Calu3 (cell line): ENCODE measurements at regions of chr12 and their contacts with region 1.

Region 1: GRCh38 chr12:69821456-69822159 is 3.4 kb upstream of the MYRFL start:
- DNase-seq: peak; percentile 79
- H3K4me3 Mint-ChIP-seq: peak overlapping the region; percentile 67
- H3K27ac Mint-ChIP-seq: peak overlapping the region; percentile 97
- H3K4me1 Mint-ChIP-seq: peaks cover 68% of the 10 kb centered on the region
- H3K27me3 Mint-ChIP-seq: no peaks in the 10 kb centered on the region
- CTCF ChIP-seq: no peak

Region 2: DNA sequence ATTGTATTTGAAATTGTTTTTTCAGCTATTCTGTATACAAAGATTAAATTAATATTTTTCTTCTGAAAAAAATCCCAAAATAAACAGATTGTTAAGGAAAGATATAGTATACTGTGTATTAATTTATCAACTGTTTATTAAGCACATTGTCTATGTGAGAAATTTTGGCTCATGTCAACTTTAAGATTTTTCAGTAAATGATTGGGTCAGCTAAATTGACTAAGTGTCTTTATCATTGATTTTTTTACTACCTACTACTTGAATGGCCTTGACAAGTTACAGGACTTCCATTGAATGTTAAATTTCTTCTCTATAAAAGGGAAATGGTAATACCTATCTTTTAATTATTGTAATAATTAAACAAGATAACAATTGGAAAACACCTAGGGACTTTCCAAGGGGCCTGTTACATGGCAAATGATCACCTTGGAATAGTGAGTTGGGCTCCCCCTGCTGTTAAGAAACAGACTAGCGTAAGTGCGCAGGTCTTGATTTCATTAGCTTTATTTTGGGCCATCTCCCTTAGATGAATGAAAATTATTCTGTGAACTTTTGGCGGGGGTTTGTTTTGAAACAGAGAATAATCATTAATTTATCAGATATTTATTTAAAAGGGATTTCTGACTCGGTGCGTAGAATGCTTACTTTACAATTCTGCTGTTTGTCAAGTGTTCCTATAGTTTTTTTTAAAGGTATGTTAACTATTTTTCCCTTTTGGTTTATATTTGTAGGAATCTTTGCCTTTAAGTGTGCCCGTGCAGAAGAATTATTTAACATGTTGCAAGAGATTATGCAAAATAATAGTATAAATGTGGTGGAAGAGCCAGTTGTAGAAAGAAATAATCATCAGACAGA is 250.8 kb before region 1 on chr12:
- CTCF ChIA-PET with region 1: no interaction called
- intact Hi-C with region 1: no loop called
- DNase-seq: peak; percentile 68
- H3K4me3 Mint-ChIP-seq: no peak overlapping the region
- H3K27ac Mint-ChIP-seq: no peak overlapping the region
- H3K4me1 Mint-ChIP-seq: peaks cover 14% of the 10 kb centered on the region
- H3K27me3 Mint-ChIP-seq: no peaks in the 10 kb centered on the region
- CTCF ChIP-seq: peak; percentile 57

Region 3: GRCh38 chr12:69834147-69834546 is 12.5 kb after region 1 on chr12:
- CTCF ChIA-PET with region 1: interaction called, 12 read pairs
- intact Hi-C with region 1: no loop called
- DNase-seq: no peak
- H3K4me3 Mint-ChIP-seq: no peak overlapping the region
- H3K27ac Mint-ChIP-seq: no peak overlapping the region
- H3K4me1 Mint-ChIP-seq: peaks cover 52% of the 10 kb centered on the region
- H3K27me3 Mint-ChIP-seq: no peaks in the 10 kb centered on the region
- CTCF ChIP-seq: no peak